ENCODE measurements at regions of chr17 and their contacts with region 1.

Region 1: GRCh38 chr17:58447039-58447975 is 30.0 kb upstream of the RNF43 start:
- DNase-seq: peak; percentile 86
- ATAC-seq: peak; percentile 99
- H3K4me3 Mint-ChIP-seq: no peak overlapping the region
- H3K27ac Mint-ChIP-seq: peak overlapping the region; percentile 21
- H3K4me1 Mint-ChIP-seq: peaks cover 3% of the 10 kb centered on the region
- H3K27me3 Mint-ChIP-seq: no peaks in the 10 kb centered on the region

Region 2: DNA sequence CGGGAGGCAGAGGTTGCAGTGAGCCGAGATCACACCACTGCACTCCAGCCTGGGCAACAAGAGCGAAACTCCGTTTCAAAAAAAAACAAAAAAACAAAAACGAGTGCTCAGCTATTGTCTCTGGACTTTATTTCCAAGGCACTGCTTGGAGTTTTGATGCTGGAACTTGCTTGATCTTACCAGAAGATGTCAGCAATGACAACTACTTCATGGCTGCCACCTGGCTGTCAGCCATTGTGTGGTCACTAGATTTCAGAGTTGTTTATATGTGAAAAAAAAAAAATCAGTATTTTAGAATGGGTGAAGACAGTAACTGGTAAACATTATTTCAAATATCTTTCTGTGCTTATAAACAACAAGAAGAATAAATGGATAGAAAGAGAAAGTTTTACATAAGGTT is 325.4 kb before region 1 on chr17:
- CTCF ChIA-PET with region 1: no interaction called
- POLR2A ChIA-PET with region 1: no interaction called
- intact Hi-C with region 1: loop called in 1 of 2 experiments (anchors 5 kb)
- DNase-seq: peak; percentile 49
- ATAC-seq: no peak
- H3K4me3 Mint-ChIP-seq: no peak overlapping the region
- H3K27ac Mint-ChIP-seq: no peak overlapping the region
- H3K4me1 Mint-ChIP-seq: peaks cover 7% of the 10 kb centered on the region
- H3K27me3 Mint-ChIP-seq: peaks cover 8% of the 10 kb centered on the region

Region 3: GRCh38 chr17:58200017-58200633 is 247.2 kb before region 1 on chr17:
- CTCF ChIA-PET with region 1: interaction called, 5 read pairs
- POLR2A ChIA-PET with region 1: no interaction called
- intact Hi-C with region 1: loop called in 1 of 2 experiments (anchors 1 kb)
- DNase-seq: peak; percentile 79
- ATAC-seq: peak; percentile 95
- H3K4me3 Mint-ChIP-seq: no peak overlapping the region
- H3K27ac Mint-ChIP-seq: no peak overlapping the region
- H3K4me1 Mint-ChIP-seq: no peaks in the 10 kb centered on the region
- H3K27me3 Mint-ChIP-seq: no peaks in the 10 kb centered on the region

Region 4: DNA sequence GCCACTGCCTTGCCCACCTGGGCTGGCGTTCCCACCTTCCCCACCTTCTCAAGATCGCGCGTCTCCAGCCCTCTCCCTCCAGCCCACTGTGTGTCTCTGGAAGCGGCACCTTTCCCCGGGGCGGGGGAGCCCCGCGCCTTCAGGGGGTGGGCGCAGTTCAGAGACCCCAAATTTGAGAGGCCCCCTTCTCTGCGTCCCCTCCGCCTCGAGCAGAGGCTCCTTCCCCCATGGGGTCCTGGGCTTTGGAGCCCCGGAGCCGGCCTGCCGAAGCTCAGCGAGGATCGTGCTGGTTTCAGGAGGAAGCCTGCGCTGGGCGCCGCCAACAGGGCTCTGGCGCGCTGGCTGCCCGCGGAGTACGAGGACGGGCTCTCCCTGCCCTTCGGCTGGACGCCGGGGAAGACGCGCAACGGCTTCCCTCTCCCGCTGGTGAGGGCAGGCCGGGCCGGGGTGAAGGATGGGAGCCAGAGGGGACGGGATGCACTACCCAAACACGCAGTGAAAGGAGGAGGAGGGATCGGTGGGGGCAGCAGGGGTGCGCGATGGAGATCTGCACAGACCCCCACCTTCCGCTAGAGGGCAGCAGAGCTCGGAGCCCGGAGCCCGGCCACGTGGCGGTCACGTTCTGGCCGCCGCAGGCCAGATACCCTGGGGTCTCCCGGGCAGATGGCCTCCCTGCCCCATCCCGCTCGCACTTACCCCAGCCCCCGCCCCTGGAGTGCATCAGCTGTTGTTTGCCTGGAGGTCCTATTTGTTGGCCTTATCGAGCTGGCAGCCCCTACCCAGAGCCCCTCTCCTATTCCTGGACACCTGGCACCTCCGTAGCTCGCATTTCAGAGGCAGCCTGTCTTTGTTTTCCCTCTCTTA is 197.8 kb before region 1 on chr17:
- CTCF ChIA-PET with region 1: interaction called, 6 read pairs
- POLR2A ChIA-PET with region 1: no interaction called
- intact Hi-C with region 1: loop called in 1 of 2 experiments (anchors 1 kb)
- DNase-seq: peak; percentile 85
- ATAC-seq: peak; percentile 92
- H3K4me3 Mint-ChIP-seq: peak overlapping the region; percentile 64
- H3K27ac Mint-ChIP-seq: no peak overlapping the region
- H3K4me1 Mint-ChIP-seq: peaks cover 11% of the 10 kb centered on the region
- H3K27me3 Mint-ChIP-seq: peaks cover 27% of the 10 kb centered on the region

Region 5: DNA sequence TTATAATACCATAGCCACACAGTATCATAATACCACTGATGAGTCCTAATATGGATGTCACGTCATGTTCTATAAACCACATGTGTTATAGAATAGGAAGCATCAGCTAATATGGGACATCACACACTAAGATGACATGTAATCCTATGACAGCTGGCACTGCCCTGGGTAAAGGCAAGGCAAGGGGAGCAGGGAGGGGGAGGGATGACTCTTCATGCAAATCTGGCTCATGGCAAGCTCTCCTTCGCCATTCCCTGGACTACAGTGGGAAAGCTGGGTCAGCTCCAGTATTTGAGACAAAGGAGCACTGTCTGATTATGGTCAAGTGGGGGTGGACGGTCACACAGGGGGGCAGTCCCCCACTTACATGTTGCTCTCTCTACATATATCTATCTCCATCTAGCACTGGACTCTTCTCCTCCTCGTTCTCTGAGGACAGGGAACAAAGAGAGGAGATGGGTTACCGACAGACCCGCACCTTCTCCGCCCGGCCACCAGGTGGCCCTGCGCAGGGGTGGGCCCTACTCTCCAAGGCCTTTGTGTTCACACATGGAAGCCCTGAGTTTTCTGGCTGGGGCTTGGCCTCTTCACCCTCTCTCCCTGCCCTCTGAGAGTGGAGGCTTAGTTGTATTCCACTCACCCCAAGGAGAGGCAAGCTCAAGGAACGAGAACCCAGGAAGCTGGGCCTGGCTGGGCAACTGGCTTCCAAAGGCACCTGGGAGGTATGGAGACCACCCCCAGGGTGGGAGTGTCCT is 143.2 kb before region 1 on chr17:
- CTCF ChIA-PET with region 1: interaction called, 18 read pairs
- POLR2A ChIA-PET with region 1: no interaction called
- intact Hi-C with region 1: loop called (anchors 1 kb)
- DNase-seq: peak; percentile 80
- ATAC-seq: peak; percentile 97
- H3K4me3 Mint-ChIP-seq: no peak overlapping the region
- H3K27ac Mint-ChIP-seq: no peak overlapping the region
- H3K4me1 Mint-ChIP-seq: peaks cover 3% of the 10 kb centered on the region
- H3K27me3 Mint-ChIP-seq: no peaks in the 10 kb centered on the region

Region 6: DNA sequence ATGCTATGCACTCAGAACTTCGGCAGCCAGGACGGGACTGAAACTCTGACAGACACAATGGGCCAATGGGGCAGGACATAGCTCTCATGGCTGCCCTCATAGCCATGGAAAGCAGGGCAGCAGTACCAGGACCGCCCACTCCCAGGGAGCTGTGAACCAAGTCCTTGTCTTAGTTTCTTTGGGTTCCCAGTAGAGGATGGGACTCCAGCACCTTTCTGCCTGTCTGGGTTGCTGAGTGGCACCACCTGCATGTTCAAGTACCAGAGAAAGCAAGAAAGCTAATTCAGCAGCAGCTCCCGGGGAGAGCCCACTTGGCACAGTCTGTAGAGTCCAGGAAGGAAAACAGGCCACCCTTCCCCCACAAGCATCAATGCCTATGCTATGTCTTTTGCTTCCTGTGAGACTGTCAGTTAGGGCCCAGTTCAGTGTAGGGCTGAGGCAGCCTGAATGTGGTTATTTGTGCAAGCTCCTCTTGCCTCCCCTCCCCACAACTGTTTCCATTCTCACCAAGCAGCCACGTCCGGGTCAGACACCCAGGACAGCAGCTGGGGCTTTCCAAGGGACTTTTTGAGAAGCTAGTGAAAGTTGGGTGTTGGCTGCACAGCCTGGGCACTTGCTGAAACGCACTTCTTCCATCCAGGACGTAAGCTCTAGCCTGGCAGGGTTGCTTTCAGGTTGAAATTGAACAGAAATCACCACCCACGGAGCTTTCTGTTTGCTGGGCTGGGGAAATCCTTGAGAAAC is 103.1 kb before region 1 on chr17:
- CTCF ChIA-PET with region 1: interaction called, 6 read pairs
- POLR2A ChIA-PET with region 1: no interaction called
- intact Hi-C with region 1: loop called in 1 of 2 experiments (anchors 1 kb)
- DNase-seq: peak; percentile 95
- ATAC-seq: peak; percentile 76
- H3K4me3 Mint-ChIP-seq: peak overlapping the region; percentile 100
- H3K27ac Mint-ChIP-seq: peak overlapping the region; percentile 99
- H3K4me1 Mint-ChIP-seq: peaks cover 74% of the 10 kb centered on the region
- H3K27me3 Mint-ChIP-seq: no peaks in the 10 kb centered on the region